CD14-positive monocyte (primary cell): ENCODE measurements at regions of chr2 and their contacts with region 1.

Region 1: GRCh38 chr2:173075781-173076580 is at the start of gene MAP3K20:
- DNase-seq: peak; percentile 88 to 89 (median 89)
- H3K4me3 ChIP-seq: peak within 1 kb of the TSS; percentile 48 to 78 (median 58)
- H3K4me3 Mint-ChIP-seq: peak within 1 kb of the TSS; percentile 91 to 95
- H3K27ac ChIP-seq: peak within 1 kb of the TSS; percentile 56 to 94
- H3K27ac Mint-ChIP-seq: peak within 1 kb of the TSS; percentile 89 to 95 (median 93)
- H3K4me1 ChIP-seq: peaks cover 5 to 19% of the 10 kb centered on the region in 2 donors
- H3K4me1 Mint-ChIP-seq: peaks cover 24% of the 10 kb centered on the region
- H3K27me3 ChIP-seq: no peaks in the 10 kb centered on the region
- H3K27me3 Mint-ChIP-seq: peaks cover 4 to 6% (median 4%) of the 10 kb centered on the region in 3 donors
- CTCF ChIP-seq: peak; percentile 43
- polyA plus RNA-seq, gene MAP3K20: 14.3 to 30.7 (median 21.6) TPM

Region 2: GRCh38 chr2:172753610-172754009 is 322.4 kb before region 1 on chr2:
- intact Hi-C with region 1: no loop called
- DNase-seq: peak in 1 of 3 donors; percentile 13
- H3K4me3 ChIP-seq: no peak overlapping the region
- H3K4me3 Mint-ChIP-seq: no peak overlapping the region
- H3K27ac ChIP-seq: no peak overlapping the region
- H3K27ac Mint-ChIP-seq: no peak overlapping the region
- H3K4me1 ChIP-seq: no peaks in the 10 kb centered on the region
- H3K4me1 Mint-ChIP-seq: peaks cover 2% of the 10 kb centered on the region
- H3K27me3 ChIP-seq: peaks cover 0 to 2% of the 10 kb centered on the region in 2 donors
- H3K27me3 Mint-ChIP-seq: peaks cover 2 to 6% (median 3%) of the 10 kb centered on the region in 3 donors
- CTCF ChIP-seq: no peak

Region 3: DNA sequence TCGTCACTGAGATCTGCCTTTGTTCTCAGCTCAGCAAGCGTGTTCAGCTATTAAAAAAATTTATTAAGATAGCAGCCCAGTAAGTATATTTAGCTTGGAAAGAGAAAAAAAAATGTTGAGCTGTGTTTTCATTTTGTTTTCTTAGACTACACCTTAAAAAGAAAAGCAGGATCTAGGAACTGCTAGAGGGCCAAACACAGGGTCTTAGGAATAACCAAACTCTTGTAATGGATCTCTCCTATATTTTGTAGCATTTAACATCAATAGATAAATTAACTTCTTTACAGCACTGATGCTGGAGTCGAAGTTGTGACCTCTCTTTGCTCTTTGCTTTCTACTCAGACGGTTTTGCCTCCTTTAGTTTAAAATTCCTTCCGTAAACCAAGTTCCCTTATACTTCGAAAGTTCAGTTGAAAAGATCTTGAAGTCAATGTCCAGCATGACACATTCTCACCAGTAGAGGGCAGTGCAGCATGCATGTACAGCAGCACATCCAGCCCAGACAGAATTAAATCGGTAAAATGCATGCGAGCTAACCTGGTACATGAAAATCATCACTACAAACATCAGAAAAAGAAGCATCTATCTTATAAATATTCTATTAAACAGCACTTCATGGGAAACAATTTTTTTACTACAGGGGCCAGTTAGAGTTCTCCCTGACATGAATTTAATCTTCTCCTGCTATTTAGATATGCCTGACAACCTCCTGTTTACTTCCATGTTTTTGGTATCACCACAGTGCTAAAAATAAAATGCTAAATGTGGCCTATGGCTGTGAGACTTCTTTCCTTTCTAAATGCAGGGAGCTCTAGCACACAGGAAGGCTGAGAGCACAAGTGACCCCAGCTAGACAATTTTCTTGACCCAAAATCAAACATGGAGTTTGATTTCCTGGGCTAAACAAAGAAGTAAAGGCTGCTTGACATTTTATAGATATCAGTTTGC is 48.5 kb before region 1 on chr2:
- intact Hi-C with region 1: loop called (anchors 5 to 10 kb)
- DNase-seq: peak; percentile 81 to 86 (median 82)
- H3K4me3 ChIP-seq: no peak overlapping the region
- H3K4me3 Mint-ChIP-seq: no peak overlapping the region
- H3K27ac ChIP-seq: no peak overlapping the region
- H3K27ac Mint-ChIP-seq: no peak overlapping the region
- H3K4me1 ChIP-seq: peaks cover 0 to 6% of the 10 kb centered on the region in 2 donors
- H3K4me1 Mint-ChIP-seq: peaks cover 6% of the 10 kb centered on the region
- H3K27me3 ChIP-seq: no peaks in the 10 kb centered on the region
- H3K27me3 Mint-ChIP-seq: peaks cover 0 to 4% (median 4%) of the 10 kb centered on the region in 3 donors
- CTCF ChIP-seq: peak; percentile 91

Region 4: DNA sequence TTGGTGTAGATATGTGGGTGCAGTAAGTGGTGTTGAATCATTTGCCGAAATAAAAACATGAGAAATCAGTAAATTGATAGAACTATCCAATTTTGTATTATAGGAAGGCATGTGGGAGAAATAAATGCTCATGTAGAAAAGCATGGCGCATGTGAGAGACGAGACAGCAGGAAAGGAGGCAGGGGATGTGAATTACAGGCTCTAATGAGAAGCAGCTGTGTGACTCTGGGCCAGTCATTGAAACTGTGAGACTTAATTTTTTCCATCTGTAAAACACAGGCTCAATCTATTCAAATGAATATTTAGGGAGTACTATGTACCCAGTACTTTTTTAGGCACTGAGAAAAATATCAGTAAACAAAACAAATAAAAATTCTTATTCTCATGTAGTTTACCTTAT is 42.9 kb before region 1 on chr2:
- intact Hi-C with region 1: loop called (anchors 5 to 10 kb)
- DNase-seq: no peak
- H3K4me3 ChIP-seq: no peak overlapping the region
- H3K4me3 Mint-ChIP-seq: no peak overlapping the region
- H3K27ac ChIP-seq: no peak overlapping the region
- H3K27ac Mint-ChIP-seq: no peak overlapping the region
- H3K4me1 ChIP-seq: no peaks in the 10 kb centered on the region
- H3K4me1 Mint-ChIP-seq: peaks cover 2% of the 10 kb centered on the region
- H3K27me3 ChIP-seq: no peaks in the 10 kb centered on the region
- H3K27me3 Mint-ChIP-seq: peaks cover 0 to 2% (median 0%) of the 10 kb centered on the region in 3 donors
- CTCF ChIP-seq: no peak

Region 5: GRCh38 chr2:173043476-173043875 is 32.5 kb before region 1 on chr2:
- intact Hi-C with region 1: loop called in 1 of 2 experiments (anchors 5 kb)
- DNase-seq: peak; percentile 88 to 97 (median 89)
- H3K4me3 ChIP-seq: peak overlapping the region in 1 of 3 experiments; percentile 21
- H3K4me3 Mint-ChIP-seq: peak overlapping the region; percentile 65 to 81
- H3K27ac ChIP-seq: peak overlapping the region; percentile 55 to 81
- H3K27ac Mint-ChIP-seq: peak overlapping the region; percentile 86 to 97 (median 93)
- H3K4me1 ChIP-seq: peaks cover 21 to 22% of the 10 kb centered on the region in 2 donors
- H3K4me1 Mint-ChIP-seq: peaks cover 26% of the 10 kb centered on the region
- H3K27me3 ChIP-seq: no peaks in the 10 kb centered on the region
- H3K27me3 Mint-ChIP-seq: peaks cover 0 to 4% (median 2%) of the 10 kb centered on the region in 3 donors
- CTCF ChIP-seq: no peak

Region 6: DNA sequence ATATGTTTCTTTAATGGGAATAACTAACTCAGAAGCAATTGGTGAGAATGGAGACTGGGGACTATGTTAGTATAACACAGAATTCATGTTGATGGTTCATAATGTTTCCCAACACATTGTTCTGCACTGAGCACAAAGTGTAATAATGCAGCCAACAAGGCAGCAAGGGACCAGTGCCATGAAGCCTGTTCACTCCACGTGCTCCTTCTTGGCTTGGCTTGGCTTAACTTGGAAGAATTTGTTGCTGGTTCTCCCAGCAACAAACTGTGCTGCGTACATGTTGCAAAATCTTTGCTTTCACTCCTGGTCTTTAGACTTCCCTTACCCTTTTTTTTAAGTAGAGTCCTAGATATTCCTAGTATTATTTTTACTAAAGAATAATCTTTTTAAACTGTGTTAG is 129.4 kb after region 1 on chr2:
- intact Hi-C with region 1: no loop called
- DNase-seq: no peak
- H3K4me3 ChIP-seq: no peak overlapping the region
- H3K4me3 Mint-ChIP-seq: no peak overlapping the region
- H3K27ac ChIP-seq: no peak overlapping the region
- H3K27ac Mint-ChIP-seq: no peak overlapping the region
- H3K4me1 ChIP-seq: no peaks in the 10 kb centered on the region
- H3K4me1 Mint-ChIP-seq: peaks cover 3% of the 10 kb centered on the region
- H3K27me3 ChIP-seq: no peaks in the 10 kb centered on the region
- H3K27me3 Mint-ChIP-seq: no peaks in the 10 kb centered on the region
- CTCF ChIP-seq: no peak